CD14-positive monocyte (primary cell): ENCODE measurements at regions of chr1 and their contacts with region 1.

Region 1: DNA sequence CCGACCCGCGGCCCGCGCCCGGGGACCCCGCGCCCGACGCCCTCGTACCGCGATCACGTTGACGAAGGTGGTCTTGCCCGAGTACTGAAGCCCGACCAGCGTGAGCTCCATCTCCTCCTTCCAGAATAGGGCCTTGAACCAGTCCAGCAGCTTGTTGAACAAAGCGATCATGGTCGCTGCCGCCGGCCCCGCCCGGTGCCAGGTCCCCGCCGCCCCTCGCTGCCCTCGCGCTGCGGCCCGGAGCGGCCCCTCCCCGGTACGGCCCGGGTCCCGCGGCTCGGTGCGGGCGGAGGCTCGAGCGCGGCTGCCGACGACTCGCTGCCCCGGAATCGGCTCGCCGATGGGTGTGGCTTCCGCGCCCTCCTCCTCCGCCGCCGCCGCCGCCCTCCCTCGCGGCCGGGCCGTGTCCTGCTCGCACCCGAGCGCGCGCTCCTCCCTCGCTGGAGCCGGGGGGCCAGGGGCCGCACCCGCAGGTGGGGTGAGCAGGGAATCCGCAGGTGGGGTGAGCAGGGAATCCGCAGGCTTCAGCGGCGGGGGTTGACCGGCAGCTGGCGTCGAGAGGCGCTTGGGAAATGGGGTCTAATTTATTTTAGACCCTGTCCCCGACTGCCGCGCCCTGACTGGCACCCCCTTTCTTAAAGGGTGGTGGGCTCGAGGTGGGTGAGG is at the start of gene ARL8A:
- DNase-seq: peak in 2 of 3 donors; percentile 29 to 50
- H3K4me3 ChIP-seq: peak within 1 kb of the TSS; percentile 73 to 95 (median 76)
- H3K4me3 Mint-ChIP-seq: peak within 1 kb of the TSS; percentile 98 to 99
- H3K27ac ChIP-seq: peak within 1 kb of the TSS; percentile 91 to 92
- H3K27ac Mint-ChIP-seq: peak within 1 kb of the TSS; percentile 97 to 99 (median 98)
- H3K4me1 ChIP-seq: peaks cover 27 to 36% of the 10 kb centered on the region in 2 donors
- H3K4me1 Mint-ChIP-seq: peaks cover 38% of the 10 kb centered on the region
- H3K27me3 ChIP-seq: no peaks in the 10 kb centered on the region
- H3K27me3 Mint-ChIP-seq: peaks cover 0 to 8% (median 0%) of the 10 kb centered on the region in 3 donors
- CTCF ChIP-seq: no peak
- polyA plus RNA-seq, gene ARL8A: 12.4 to 123 (median 14.8) TPM

Region 2: DNA sequence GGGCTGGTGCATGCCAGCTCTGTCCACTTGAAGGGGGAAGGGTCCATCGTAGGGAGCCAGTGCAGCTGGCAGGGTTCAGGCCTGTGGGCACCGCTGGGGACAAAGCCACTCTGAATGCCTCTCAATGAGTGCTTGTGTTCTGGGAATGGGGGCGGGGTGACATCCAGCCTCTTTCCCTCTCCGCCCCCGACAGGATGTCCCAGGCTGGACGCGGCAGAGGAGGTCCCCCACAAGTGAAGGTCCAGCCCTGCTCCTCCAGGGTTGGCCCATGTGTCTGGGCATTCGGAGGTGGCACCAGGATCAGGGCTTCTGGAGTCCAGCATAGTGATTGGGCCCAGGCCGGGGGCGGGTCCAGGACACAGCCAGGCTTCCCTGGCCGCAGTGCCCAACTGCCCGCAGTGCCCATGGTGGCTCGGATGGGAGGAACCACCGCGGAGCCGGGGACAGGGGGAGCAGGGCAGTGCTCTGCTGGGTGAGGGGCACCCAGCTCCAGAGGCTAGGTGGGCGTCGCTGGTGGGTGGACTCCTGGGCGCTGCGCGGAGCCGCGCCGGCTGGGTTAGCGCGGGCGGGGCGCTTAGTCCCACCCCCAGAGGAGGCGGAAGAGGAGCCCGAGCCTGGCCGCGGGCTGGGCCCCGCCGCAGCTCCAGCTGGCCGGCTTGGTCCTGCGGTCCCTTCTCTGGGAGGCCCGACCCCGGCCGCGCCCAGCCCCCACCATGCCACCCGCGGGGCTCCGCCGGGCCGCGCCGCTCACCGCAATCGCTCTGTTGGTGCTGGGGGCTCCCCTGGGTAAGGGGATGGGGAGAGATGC is 256.0 kb before region 1 on chr1 and contains the start of gene SHISA4:
- intact Hi-C with region 1: loop called in 1 of 2 experiments (anchors 10 kb)
- DNase-seq: peak; percentile 33 to 40 (median 38)
- H3K4me3 ChIP-seq: peak within 1 kb of the TSS; percentile 48 to 74 (median 49)
- H3K4me3 Mint-ChIP-seq: peak within 1 kb of the TSS; percentile 79 to 90
- H3K27ac ChIP-seq: no peak within 1 kb of the TSS
- H3K27ac Mint-ChIP-seq: peak within 1 kb of the TSS in 2 of 7 donors; percentile 13 to 68
- H3K4me1 ChIP-seq: peaks cover 20 to 23% of the 10 kb centered on the region in 2 donors
- H3K4me1 Mint-ChIP-seq: peaks cover 22% of the 10 kb centered on the region
- H3K27me3 ChIP-seq: peaks cover 19 to 51% of the 10 kb centered on the region in 2 donors
- H3K27me3 Mint-ChIP-seq: peaks cover 43 to 60% (median 53%) of the 10 kb centered on the region in 3 donors
- CTCF ChIP-seq: no peak
- polyA plus RNA-seq, gene SHISA4: 1.5 to 3.1 (median 2.3) TPM

Region 3: GRCh38 chr1:202162047-202162417 is 17.5 kb after region 1 on chr1:
- intact Hi-C with region 1: loop called in 1 of 2 experiments (anchors 1 kb)
- DNase-seq: peak in 1 of 3 donors; percentile 28
- H3K4me3 ChIP-seq: peak overlapping the region in 2 of 3 experiments; percentile 1 to 82
- H3K4me3 Mint-ChIP-seq: peak overlapping the region; percentile 39 to 96
- H3K27ac ChIP-seq: peak overlapping the region in 1 of 2 donors; percentile 94
- H3K27ac Mint-ChIP-seq: peak overlapping the region in 5 of 7 donors; percentile 13 to 84 (median 50)
- H3K4me1 ChIP-seq: peaks cover 46 to 57% of the 10 kb centered on the region in 2 donors
- H3K4me1 Mint-ChIP-seq: peaks cover 67% of the 10 kb centered on the region
- H3K27me3 ChIP-seq: no peaks in the 10 kb centered on the region
- H3K27me3 Mint-ChIP-seq: peaks cover 2 to 5% (median 4%) of the 10 kb centered on the region in 3 donors
- CTCF ChIP-seq: no peak

Region 4: GRCh38 chr1:202329891-202330290 is 185.4 kb after region 1 on chr1:
- intact Hi-C with region 1: no loop called
- DNase-seq: no peak
- H3K4me3 ChIP-seq: no peak overlapping the region
- H3K4me3 Mint-ChIP-seq: no peak overlapping the region
- H3K27ac ChIP-seq: no peak overlapping the region
- H3K27ac Mint-ChIP-seq: no peak overlapping the region
- H3K4me1 ChIP-seq: no peaks in the 10 kb centered on the region
- H3K4me1 Mint-ChIP-seq: no peaks in the 10 kb centered on the region
- H3K27me3 ChIP-seq: no peaks in the 10 kb centered on the region
- H3K27me3 Mint-ChIP-seq: no peaks in the 10 kb centered on the region
- CTCF ChIP-seq: no peak